AG04449 (cell line): ENCODE measurements at regions of chr1 and their contacts with region 1.

Region 1: GRCh38 chr1:161045750-161046571 is at the start of gene USF1:
- DNase-seq: peak; percentile 63
- H3K4me3 ChIP-seq: peak within 1 kb of the TSS; percentile 90
- CTCF ChIP-seq: no peak

Region 2: DNA sequence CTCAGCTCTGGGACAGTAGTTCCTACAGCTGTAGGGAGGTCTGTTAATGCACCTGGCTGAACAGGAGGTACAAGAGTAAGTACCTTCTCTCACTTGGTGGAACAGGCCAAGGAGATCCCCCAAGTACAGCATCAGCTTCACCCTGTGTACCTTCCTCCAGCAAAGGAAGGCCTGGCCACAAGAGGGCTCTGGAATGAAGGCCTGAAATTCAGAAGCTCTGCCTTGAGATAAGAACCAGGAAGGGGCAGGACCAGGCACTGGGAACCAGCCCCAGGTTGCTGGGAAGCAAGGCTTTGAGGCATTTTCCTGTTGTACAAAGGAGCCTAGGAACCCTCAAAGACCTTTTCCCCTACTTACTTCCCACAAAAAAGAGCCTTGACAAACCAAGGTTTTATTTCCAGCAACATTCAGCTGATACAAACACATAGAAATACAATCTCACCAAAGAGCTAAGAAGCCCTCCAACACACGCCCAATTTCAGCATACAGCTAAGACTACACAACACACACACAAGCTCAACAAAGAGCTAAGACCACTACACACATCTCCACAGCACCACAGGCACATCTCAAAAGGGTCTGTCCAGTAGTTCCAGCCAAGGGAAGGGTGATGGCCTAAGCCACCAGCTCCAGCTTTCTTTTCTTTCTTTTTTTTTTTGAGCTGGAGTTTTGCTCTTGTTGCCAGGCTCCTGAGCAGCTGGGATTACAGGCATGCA is 48.5 kb before region 1 on chr1:
- CTCF ChIA-PET with region 1: interaction called, 26 read pairs
- POLR2A ChIA-PET with region 1: no interaction called
- DNase-seq: no peak
- H3K4me3 ChIP-seq: no peak overlapping the region
- CTCF ChIP-seq: peak; percentile 68

Region 3: DNA sequence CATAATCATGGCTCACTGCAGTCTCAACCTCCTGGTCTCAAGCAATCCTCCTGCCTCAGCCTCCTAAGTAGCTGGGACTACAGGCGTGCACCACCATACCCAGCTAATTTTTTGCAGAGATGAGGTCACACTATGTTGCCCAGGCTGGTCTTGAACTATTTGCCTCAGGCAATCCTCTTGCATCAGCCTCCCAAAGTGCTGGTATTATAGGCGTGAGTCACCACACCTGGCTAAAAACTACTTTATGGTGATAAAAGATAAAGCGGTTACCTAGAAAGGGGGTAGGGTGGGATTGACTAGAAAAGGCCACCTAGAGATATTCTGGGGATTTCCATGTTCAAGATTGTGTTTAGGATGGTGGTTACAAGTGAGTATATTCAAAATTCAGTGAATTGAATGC is 12.2 kb before region 1 on chr1:
- CTCF ChIA-PET with region 1: interaction called, 10 read pairs
- POLR2A ChIA-PET with region 1: interaction called, 6 read pairs
- DNase-seq: no peak
- H3K4me3 ChIP-seq: no peak overlapping the region
- CTCF ChIP-seq: no peak

Region 4: DNA sequence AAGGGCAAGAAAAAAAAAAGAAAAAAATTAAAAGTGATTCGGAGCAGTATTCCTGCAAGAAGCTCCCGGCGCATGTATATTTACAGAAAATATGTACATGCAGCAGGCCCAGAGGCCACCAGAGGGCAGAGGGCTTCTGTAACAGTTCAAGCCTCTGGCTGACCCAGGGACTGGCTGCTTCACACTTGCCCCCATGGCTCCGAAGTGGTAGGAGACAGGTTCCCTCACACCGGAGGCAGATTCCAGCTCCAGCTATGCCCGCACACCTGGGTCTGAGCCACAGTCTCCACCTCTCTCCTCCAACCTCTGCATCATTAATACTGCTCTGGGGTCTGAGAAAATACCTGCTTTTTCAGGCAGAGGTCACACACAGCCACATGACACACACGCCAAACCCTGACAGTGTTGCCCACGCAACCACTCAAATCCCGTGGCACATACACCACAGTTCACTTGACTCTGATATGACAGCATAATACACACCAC is 26.0 kb after region 1 on chr1:
- CTCF ChIA-PET with region 1: interaction called, 14 read pairs
- POLR2A ChIA-PET with region 1: no interaction called
- DNase-seq: no peak
- H3K4me3 ChIP-seq: no peak overlapping the region
- CTCF ChIP-seq: peak; percentile 50

Region 5: DNA sequence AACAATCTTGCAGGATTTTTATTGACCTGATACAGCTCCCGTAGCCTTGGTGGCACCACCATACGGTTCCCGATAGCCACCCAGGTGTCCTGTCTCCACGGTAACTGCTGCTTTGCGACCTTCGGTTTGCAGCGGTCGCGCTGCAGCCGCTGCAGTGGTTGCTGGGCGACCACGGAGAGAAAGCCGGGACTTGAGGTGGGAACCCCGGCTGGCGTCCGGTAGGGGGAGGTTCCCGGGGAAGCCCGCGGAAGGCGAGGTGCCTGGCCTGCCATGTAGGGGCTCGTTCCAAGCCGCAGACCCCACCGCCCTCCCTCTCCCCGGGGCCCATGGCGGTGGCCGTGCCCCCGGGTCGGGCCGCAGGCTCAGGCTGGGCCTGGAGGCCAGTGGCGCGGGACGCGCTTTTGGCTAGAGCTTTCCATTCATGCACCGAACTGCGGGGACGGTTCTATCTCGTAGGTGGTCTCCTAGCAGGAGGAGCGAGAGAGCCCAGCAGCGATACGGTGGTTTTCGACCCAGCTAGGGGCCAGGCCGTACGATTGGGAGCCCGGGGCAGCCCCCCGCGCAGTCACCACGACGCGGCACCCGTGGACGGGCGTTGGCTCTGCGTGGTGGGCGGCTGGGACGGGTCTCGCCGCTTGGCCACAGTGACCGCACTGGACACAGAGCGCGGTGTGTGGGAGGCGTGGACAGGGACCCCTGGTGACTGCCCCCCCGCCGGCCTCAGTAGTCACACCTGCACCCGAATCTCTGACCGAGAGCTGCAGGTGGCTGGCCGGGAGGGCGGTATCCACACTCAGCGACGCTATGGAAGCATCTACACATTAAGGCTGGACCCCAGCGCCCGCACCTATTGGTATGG is 52.5 kb after region 1 on chr1 and contains the start of gene KLHDC9:
- CTCF ChIA-PET with region 1: interaction called, 107 read pairs
- POLR2A ChIA-PET with region 1: interaction called, 11 read pairs
- DNase-seq: no peak
- H3K4me3 ChIP-seq: peak within 1 kb of the TSS; percentile 61
- CTCF ChIP-seq: peak; percentile 38

Region 6: GRCh38 chr1:161132410-161133219 is 86.7 kb after region 1 on chr1 and contains the start of gene DEDD:
- CTCF ChIA-PET with region 1: interaction called, 11 read pairs
- POLR2A ChIA-PET with region 1: interaction called, 10 read pairs
- DNase-seq: peak; percentile 82
- H3K4me3 ChIP-seq: peak within 1 kb of the TSS; percentile 95
- CTCF ChIP-seq: no peak

Region 7: GRCh38 chr1:161139765-161140164 is 93.8 kb after region 1 on chr1:
- CTCF ChIA-PET with region 1: interaction called, 16 read pairs
- POLR2A ChIA-PET with region 1: interaction called, 3 read pairs
- DNase-seq: no peak
- H3K4me3 ChIP-seq: no peak overlapping the region
- CTCF ChIP-seq: peak; percentile 34

Region 8: GRCh38 chr1:161225534-161226319 is 179.8 kb after region 1 on chr1 and contains the start of gene TOMM40L:
- CTCF ChIA-PET with region 1: no interaction called
- POLR2A ChIA-PET with region 1: no interaction called
- DNase-seq: peak; percentile 99
- H3K4me3 ChIP-seq: peak within 1 kb of the TSS; percentile 95
- CTCF ChIP-seq: peak; percentile 77

Region 9: DNA sequence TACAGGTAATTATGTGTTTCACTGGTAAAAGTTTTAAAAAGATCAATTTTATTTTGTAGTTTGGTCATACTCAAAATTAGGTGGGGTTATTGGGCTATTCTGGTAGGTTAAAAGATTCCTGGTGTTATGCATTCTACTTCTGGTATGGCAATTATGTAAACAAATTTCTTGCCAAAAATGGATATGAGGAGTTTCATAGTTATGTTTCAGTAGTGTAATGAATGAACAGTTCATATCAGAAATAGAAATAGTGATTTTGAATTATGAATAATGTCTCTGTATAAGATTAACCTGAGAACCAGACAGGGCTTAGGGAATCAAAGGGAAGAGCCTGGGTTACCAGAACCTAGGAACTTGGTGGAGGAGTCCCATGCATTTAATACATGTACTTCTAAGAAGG is 736.0 kb after region 1 on chr1:
- CTCF ChIA-PET with region 1: no interaction called
- POLR2A ChIA-PET with region 1: no interaction called
- DNase-seq: peak; percentile 5
- H3K4me3 ChIP-seq: no peak overlapping the region
- CTCF ChIP-seq: no peak